MCF 10A (cell line): ENCODE measurements at regions of chr11 and their contacts with region 1.

Region 1: GRCh38 chr11:133927690-133928627 is 28.8 kb downstream of the IGSF9B start:
- DNase-seq: peak; percentile 78
- H3K4me3 Mint-ChIP-seq: peak overlapping the region; percentile 69
- H3K27ac Mint-ChIP-seq: peak overlapping the region; percentile 71
- H3K4me1 Mint-ChIP-seq: peaks cover 18% of the 10 kb centered on the region
- H3K27me3 Mint-ChIP-seq: no peaks in the 10 kb centered on the region
- CTCF ChIP-seq: peak; percentile 98

Region 2: GRCh38 chr11:133382131-133382812 is 545.7 kb before region 1 on chr11:
- CTCF ChIA-PET with region 1: no interaction called
- POLR2A ChIA-PET with region 1: no interaction called
- intact Hi-C with region 1: no loop called
- DNase-seq: no peak
- H3K4me3 Mint-ChIP-seq: no peak overlapping the region
- H3K27ac Mint-ChIP-seq: no peak overlapping the region
- H3K4me1 Mint-ChIP-seq: no peaks in the 10 kb centered on the region
- H3K27me3 Mint-ChIP-seq: no peaks in the 10 kb centered on the region
- CTCF ChIP-seq: no peak

Region 3: DNA sequence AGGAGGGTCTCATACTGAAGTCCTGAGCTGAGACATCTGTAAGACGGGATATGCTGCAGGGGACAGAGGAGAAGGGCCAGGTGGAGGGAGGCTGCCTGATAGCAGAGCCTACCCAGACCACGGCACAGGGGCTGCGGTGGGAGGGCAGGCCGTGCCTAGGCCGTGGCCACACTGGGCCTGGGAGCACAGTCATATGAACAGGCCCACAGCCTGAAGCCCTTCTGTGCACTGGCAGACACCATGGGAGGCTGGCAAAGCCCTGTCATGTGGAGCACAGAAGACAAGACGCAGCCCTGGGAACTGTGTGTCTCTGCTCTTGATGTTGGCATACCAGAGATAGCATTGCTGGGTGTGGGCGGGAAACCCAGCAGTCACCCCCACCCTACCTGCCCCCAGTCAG is 85.9 kb before region 1 on chr11:
- CTCF ChIA-PET with region 1: no interaction called
- POLR2A ChIA-PET with region 1: no interaction called
- intact Hi-C with region 1: no loop called
- DNase-seq: no peak
- H3K4me3 Mint-ChIP-seq: no peak overlapping the region
- H3K27ac Mint-ChIP-seq: no peak overlapping the region
- H3K4me1 Mint-ChIP-seq: no peaks in the 10 kb centered on the region
- H3K27me3 Mint-ChIP-seq: peaks cover 39% of the 10 kb centered on the region
- CTCF ChIP-seq: no peak

Region 4: DNA sequence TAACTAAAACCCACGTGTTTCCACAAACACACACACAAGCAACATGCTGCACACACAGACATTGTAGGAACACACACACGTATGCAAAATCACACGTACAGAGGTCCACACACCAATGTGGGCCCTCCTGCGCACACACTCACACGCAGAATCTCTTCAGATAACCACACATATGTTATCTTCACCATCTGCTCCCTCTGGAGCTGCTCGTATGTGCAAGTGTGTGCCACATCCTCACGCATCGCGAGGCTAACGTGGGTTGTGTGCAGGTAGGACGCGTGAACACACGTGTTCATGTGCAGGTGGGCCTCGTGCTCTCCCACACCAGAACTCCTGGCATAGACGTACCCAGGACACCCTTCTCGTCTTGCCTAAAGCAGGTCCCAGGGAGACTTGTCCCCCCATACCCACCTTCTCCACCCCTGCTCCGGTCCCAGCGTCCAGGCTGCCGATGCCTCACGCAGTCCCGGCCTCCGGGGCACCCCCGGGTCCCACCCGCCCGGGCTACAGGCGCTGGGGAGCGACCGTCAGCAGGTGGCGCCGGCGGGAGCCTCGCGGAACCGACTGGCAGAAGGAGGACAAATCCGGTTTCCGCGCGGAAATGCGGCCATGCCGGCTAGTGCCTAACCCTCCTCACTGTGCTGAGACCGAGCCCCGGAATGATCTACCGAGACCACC is 39.1 kb after region 1 on chr11:
- CTCF ChIA-PET with region 1: no interaction called
- POLR2A ChIA-PET with region 1: interaction called, 3 read pairs
- intact Hi-C with region 1: loop called (anchors 5 kb)
- DNase-seq: no peak
- H3K4me3 Mint-ChIP-seq: no peak overlapping the region
- H3K27ac Mint-ChIP-seq: no peak overlapping the region
- H3K4me1 Mint-ChIP-seq: peaks cover 29% of the 10 kb centered on the region
- H3K27me3 Mint-ChIP-seq: peaks cover 12% of the 10 kb centered on the region
- CTCF ChIP-seq: no peak

Region 5: DNA sequence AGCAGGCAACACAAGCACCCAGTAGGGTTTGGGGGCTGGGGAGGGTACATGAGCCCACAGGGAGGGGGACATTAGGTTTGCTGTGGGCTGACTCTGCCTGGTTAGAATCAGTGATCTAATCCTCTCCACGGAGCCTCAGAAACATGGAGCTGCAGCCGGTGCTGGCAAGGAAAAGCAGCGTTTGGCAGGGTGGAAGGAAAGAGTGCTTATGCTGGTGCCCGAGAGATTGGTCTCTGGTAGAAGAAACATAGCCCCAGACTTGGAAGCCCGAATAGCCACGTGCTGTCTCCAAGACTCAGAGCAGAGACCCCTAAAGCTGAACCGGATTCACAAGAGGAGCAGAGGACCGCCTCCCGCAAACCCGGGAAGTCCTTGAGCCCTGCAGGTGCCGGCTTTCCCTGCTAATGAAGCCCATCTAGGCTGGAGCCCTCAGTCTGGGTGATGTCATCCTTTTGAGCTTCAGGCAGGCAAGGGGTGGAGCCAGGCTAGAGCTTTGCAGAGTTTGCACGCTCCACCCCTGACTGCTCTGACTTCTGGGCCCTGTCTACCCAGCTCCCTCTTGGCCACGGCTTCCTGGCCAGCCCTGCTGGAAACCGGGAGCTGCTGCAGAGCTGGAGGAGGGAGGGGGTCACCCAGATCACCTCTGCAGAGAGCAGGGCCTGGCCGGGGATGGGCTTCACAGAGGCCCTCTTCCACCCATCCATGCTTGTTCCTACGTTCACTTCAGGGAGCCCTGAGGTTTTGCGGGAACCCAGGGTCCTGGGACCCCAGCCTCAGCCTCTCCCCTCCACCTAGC is 105.9 kb after region 1 on chr11:
- CTCF ChIA-PET with region 1: interaction called, 41 read pairs
- POLR2A ChIA-PET with region 1: interaction called, 6 read pairs
- intact Hi-C with region 1: no loop called
- DNase-seq: peak; percentile 86
- H3K4me3 Mint-ChIP-seq: peak overlapping the region; percentile 58
- H3K27ac Mint-ChIP-seq: peak overlapping the region; percentile 76
- H3K4me1 Mint-ChIP-seq: peaks cover 36% of the 10 kb centered on the region
- H3K27me3 Mint-ChIP-seq: no peaks in the 10 kb centered on the region
- CTCF ChIP-seq: no peak

Region 6: DNA sequence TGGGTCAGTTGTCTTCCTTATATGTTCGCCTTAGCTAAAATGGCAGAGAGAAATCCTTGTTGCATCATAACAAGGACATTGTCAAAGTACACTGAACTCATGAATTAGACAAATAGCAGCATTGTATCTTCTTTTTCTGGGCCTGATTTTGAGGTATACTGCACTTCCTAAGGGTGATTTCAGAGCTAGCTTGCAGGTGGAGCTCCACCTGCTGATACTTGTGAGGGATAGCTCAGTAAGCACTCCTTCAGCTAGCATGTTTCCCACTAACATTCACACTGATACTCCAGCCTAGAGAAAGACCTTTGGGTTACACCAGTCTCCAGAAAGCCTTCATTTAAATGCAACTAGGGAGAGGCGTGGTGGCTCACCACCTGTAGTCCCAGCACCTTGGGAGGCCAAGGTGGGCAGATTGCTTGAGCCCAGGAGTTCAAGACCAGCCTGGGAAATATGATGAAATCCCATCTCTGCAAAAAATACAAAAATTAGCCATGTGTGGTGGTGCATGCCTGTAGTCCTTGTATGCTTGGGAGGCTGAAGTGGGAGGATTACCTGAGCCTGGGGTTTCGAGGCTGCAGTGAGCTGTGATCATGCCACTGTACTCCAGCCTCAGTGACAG is 170.7 kb after region 1 on chr11:
- CTCF ChIA-PET with region 1: interaction called, 29 read pairs
- POLR2A ChIA-PET with region 1: interaction called, 3 read pairs
- intact Hi-C with region 1: loop called (anchors 1 kb)
- DNase-seq: peak; percentile 14
- H3K4me3 Mint-ChIP-seq: no peak overlapping the region
- H3K27ac Mint-ChIP-seq: no peak overlapping the region
- H3K4me1 Mint-ChIP-seq: no peaks in the 10 kb centered on the region
- H3K27me3 Mint-ChIP-seq: peaks cover 23% of the 10 kb centered on the region
- CTCF ChIP-seq: peak; percentile 41